PC-3 (cell line): ENCODE measurements at regions of chr16 and their contacts with region 1.

Region 1: GRCh38 chr16:86761111-86762031 is 183.0 kb downstream of the FOXL1 start:
- DNase-seq: peak; percentile 60
- ATAC-seq: peak; percentile 67
- H3K4me3 ChIP-seq: no peak overlapping the region
- H3K27ac ChIP-seq: no peak overlapping the region
- H3K4me1 ChIP-seq: no peaks in the 10 kb centered on the region; the same call in 1 of the 2 replicates
- H3K27me3 ChIP-seq: no peaks in the 10 kb centered on the region
- CTCF ChIP-seq: peak; percentile 73

Region 2: GRCh38 chr16:86363057-86363490 is 398.3 kb before region 1 on chr16:
- CTCF ChIA-PET with region 1: no interaction called
- POLR2A ChIA-PET with region 1: no interaction called
- intact Hi-C with region 1: no loop called
- DNase-seq: peak; percentile 43
- ATAC-seq: no peak
- H3K4me3 ChIP-seq: no peak overlapping the region
- H3K27ac ChIP-seq: no peak overlapping the region
- H3K4me1 ChIP-seq: no peaks in the 10 kb centered on the region
- H3K27me3 ChIP-seq: peaks cover 94% of the 10 kb centered on the region
- CTCF ChIP-seq: no peak

Region 3: GRCh38 chr16:86747761-86748160 is 13.6 kb before region 1 on chr16:
- CTCF ChIA-PET with region 1: no interaction called
- POLR2A ChIA-PET with region 1: no interaction called
- intact Hi-C with region 1: no loop called
- DNase-seq: no peak
- ATAC-seq: no peak
- H3K4me3 ChIP-seq: no peak overlapping the region
- H3K27ac ChIP-seq: no peak overlapping the region
- H3K4me1 ChIP-seq: peaks cover 12% of the 10 kb centered on the region
- H3K27me3 ChIP-seq: no peaks in the 10 kb centered on the region
- CTCF ChIP-seq: no peak

Region 4: GRCh38 chr16:86874141-86874540 is 112.8 kb after region 1 on chr16:
- CTCF ChIA-PET with region 1: interaction called, 11 read pairs
- POLR2A ChIA-PET with region 1: no interaction called
- intact Hi-C with region 1: no loop called
- DNase-seq: peak; percentile 53
- ATAC-seq: peak; percentile 64
- H3K4me3 ChIP-seq: no peak overlapping the region
- H3K27ac ChIP-seq: no peak overlapping the region
- H3K4me1 ChIP-seq: no peaks in the 10 kb centered on the region
- H3K27me3 ChIP-seq: no peaks in the 10 kb centered on the region
- CTCF ChIP-seq: peak; percentile 60